Endothelial cell of umbilical vein (primary cell): ENCODE measurements at regions of chr1 and their contacts with region 1.

Region 1: DNA sequence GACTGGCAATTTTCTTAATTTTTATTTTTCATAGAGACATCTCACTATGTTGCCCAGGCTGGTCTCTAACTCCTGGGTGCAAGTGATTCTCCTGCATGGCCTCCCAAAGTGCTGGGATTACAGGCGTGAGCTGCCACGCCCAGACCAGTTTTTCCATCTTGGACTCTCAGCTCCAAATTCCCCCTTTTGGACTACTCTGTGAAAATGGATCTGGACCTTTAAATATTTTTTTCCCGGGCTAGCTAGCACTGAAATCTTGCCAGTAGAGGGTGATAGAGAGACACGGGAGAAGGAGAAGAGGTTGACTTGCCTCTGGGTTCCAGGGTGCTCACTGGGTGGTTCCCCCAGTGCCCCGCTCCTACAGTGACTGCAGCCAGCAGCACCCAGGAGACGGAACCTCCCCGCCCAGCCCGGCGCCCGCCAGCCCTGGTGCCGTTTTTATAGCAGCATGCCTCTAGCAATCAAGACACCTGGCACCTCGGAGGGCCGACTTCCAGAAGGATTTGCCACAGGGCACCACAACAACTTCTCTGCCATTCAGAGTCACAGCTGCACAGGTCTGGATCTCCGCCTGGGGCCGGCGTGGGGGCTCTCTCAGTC is 34.7 kb upstream of the SCCPDH start:
- DNase-seq: peak; percentile 71
- H3K4me3 ChIP-seq: peak overlapping the region in 1 of 3 experiments; percentile 5
- H3K27ac ChIP-seq: no peak overlapping the region
- H3K4me1 ChIP-seq: no peaks in the 10 kb centered on the region
- H3K27me3 ChIP-seq: no peaks in the 10 kb centered on the region
- CTCF ChIP-seq: peak; percentile 75 to 81
- POLR2A ChIP-seq: no peak

Region 2: DNA sequence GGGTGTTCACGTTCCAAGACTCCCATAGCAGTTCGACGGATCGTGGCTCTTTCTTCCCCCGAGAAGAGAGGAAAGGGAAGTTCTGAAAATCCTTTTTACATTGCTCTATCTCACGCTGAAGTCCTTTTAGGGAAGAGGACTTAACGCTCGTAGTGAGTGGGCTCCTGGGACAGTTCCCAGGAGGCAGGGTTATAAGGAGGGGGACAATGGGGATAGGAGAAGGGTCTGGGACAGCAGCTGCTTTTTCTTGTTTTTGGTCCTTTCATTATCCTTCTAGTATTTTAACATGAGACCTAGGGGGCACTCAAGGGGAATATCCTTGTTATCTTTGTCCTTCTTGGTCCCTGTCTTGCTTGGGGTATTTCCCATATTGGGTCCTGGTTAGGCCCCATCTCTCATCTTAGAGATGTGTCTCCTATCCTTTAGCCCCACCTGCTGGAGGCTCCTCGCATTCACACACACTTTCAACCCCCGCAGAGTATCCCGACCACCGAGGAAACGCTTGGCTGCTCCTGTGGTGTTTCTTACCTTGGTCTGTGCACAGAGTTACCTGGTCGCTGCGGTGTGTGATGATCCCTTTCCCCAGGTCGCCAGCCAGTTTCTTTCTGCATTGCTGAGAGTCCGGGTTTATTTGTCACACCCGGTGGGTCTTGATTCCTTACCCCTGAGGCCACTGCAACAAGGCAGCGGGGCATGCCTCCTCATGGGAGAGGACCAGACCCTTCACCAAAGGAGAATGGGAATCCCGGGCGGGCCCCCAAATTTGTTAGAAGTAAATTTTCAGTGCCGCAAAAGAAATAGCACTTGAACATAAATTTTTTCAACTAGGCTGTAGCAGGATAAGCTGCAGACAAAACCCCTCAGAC is 64.4 kb after region 1 on chr1:
- CTCF ChIA-PET with region 1: interaction called, 28 read pairs
- POLR2A ChIA-PET with region 1: no interaction called
- dilution Hi-C with region 1: no loop called
- intact Hi-C with region 1: loop called (anchors 1 kb)
- DNase-seq: peak; percentile 60
- H3K4me3 ChIP-seq: no peak overlapping the region
- H3K27ac ChIP-seq: no peak overlapping the region
- H3K4me1 ChIP-seq: no peaks in the 10 kb centered on the region
- H3K27me3 ChIP-seq: no peaks in the 10 kb centered on the region
- CTCF ChIP-seq: peak; percentile 74 to 80
- POLR2A ChIP-seq: no peak